Naive thymus-derived CD4-positive, alpha-beta T cell (primary cell): ENCODE measurements at regions of chr12 and their contacts with region 1.

Region 1: GRCh38 chr12:32679091-32679919 is at the start of gene DNM1L:
- DNase-seq: peak; percentile 85 to 93 (median 92)
- ATAC-seq: peak; percentile 99
- H3K4me3 ChIP-seq: peak within 1 kb of the TSS; percentile 83
- H3K4me3 Mint-ChIP-seq: peak within 1 kb of the TSS; percentile 83 to 97 (median 93)
- H3K27ac ChIP-seq: peak within 1 kb of the TSS; percentile 82
- H3K27ac Mint-ChIP-seq: peak within 1 kb of the TSS; percentile 59 to 95 (median 89)
- H3K4me1 ChIP-seq: peaks cover 9 to 11% of the 10 kb centered on the region in 2 donors
- H3K4me1 Mint-ChIP-seq: peaks cover 16 to 39% (median 31%) of the 10 kb centered on the region in 7 donors
- H3K27me3 ChIP-seq: no peaks in the 10 kb centered on the region
- H3K27me3 Mint-ChIP-seq: no peaks in the 10 kb centered on the region
- total RNA-seq, gene DNM1L: 41.6 to 68.4 (median 58.9) TPM

Region 2: DNA sequence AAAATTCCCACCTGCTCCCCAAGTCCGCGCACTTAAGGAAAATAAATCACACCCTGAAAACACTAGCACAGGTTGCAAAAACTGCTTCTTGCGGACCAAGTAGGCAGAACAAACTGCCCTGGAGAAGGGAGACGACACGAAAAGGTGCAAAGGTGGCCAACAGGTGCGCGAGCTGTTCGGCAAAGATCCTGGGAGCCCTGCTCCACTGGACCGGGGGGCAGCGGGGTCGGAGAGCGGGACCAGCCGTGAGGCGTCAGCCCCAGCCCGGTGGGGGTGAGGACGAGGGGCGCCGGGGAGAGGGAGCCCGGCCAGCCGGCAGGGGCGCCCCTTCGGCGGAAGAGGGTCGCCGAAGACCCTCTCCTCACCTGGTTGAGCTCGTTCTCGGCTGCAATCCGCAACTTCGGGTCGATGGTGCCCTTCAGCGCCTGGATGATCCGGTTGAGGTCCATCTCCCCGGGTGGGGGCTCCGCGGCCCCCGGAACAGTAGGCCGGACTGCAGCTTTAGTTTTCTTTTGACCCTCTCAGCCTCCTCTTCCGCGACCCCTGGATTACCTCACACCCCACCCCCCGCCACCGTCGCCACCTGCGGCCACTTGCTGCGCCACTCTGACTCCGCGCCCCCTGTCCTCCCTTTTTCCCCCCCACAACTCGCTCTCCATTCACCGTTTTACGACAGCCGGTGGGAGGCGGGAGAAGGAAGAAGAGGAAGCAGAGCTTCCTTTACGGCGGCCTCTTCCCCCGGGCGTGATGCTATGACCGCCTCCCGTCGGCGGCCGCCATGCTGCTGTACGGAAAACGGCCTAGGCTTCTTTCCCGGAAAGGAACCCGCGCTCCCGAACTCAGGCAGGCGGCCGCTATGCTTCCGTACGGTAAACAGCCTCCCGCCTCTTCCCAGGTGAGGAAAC is 1983.9 kb before region 1 on chr12 and contains the start of gene IPO8:
- CTCF ChIA-PET with region 1: no interaction called
- POLR2A ChIA-PET with region 1: no interaction called
- intact Hi-C with region 1: loop called in 1 of 2 experiments (anchors 5 kb)
- DNase-seq: peak; percentile 61 to 83 (median 76)
- ATAC-seq: peak; percentile 97
- H3K4me3 ChIP-seq: peak within 1 kb of the TSS; percentile 94
- H3K4me3 Mint-ChIP-seq: peak within 1 kb of the TSS; percentile 93 to 100 (median 96)
- H3K27ac ChIP-seq: peak within 1 kb of the TSS; percentile 78
- H3K27ac Mint-ChIP-seq: peak within 1 kb of the TSS; percentile 91 to 98 (median 94)
- H3K4me1 ChIP-seq: peaks cover 22 to 28% of the 10 kb centered on the region in 2 donors
- H3K4me1 Mint-ChIP-seq: peaks cover 27 to 52% (median 45%) of the 10 kb centered on the region in 7 donors
- H3K27me3 ChIP-seq: no peaks in the 10 kb centered on the region
- H3K27me3 Mint-ChIP-seq: peaks cover 0 to 6% (median 4%) of the 10 kb centered on the region in 5 donors
- total RNA-seq, gene IPO8: 30.4 to 59.2 (median 44.4) TPM

Region 3: GRCh38 chr12:31659087-31659933 is 1020.0 kb before region 1 on chr12 and contains the start of gene ETFBKMT:
- CTCF ChIA-PET with region 1: no interaction called
- POLR2A ChIA-PET with region 1: no interaction called
- intact Hi-C with region 1: loop called (anchors 1 kb)
- DNase-seq: peak; percentile 85 to 95 (median 93)
- ATAC-seq: peak; percentile 99
- H3K4me3 ChIP-seq: peak within 1 kb of the TSS; percentile 85
- H3K4me3 Mint-ChIP-seq: peak within 1 kb of the TSS; percentile 81 to 99 (median 96)
- H3K27ac ChIP-seq: peak within 1 kb of the TSS; percentile 90
- H3K27ac Mint-ChIP-seq: peak within 1 kb of the TSS; percentile 91 to 100 (median 97)
- H3K4me1 ChIP-seq: peaks cover 0 to 10% of the 10 kb centered on the region in 2 donors
- H3K4me1 Mint-ChIP-seq: peaks cover 3 to 36% (median 24%) of the 10 kb centered on the region in 7 donors
- H3K27me3 ChIP-seq: no peaks in the 10 kb centered on the region
- H3K27me3 Mint-ChIP-seq: no peaks in the 10 kb centered on the region
- total RNA-seq, gene ETFBKMT: 0.92 to 2.0 (median 1.9) TPM

Region 4: DNA sequence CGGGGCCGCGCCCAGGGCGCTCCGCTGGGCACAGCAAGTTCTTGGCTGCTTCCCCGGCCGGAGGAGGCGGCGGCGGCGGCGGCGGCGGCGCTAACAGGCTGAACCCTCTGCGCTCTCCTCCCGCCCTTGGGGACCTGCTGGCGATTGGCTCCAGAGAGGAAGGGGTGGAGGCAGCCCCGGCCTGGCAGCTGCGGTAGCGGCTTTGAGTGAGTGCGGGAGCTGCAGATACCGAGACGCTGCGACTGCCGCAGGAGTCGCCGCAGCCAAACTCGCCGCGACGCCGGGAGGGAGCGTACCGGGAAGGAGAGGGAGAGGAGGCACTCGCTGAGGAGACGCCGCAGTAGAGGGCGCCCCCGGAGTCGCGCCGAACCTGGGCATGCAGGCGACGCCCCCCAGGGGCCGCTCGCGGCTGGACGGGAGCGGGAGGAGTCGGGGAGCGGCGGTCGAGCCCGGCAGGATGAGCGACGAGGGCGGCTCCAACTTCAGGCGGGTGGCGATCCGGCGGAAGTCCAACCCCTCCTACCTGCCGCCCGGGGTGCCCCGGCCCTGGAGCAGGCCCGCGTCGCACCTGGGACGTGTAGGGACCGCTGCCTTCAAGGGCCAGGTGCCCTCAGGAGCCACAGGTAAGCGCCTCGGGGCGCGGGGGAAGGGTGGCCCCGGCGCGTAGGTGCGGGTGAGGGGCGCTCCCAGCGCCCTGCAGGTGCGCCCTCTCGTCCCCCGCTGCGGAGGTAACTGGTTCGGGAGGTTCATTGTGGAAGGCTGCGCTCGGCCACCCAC is 279.8 kb before region 1 on chr12 and contains the start of gene FGD4:
- CTCF ChIA-PET with region 1: no interaction called
- POLR2A ChIA-PET with region 1: no interaction called
- intact Hi-C with region 1: loop called in 1 of 2 experiments (anchors 5 kb)
- DNase-seq: peak; percentile 16 to 68 (median 37)
- ATAC-seq: peak; percentile 91
- H3K4me3 ChIP-seq: peak within 1 kb of the TSS; percentile 51
- H3K4me3 Mint-ChIP-seq: peak within 1 kb of the TSS; percentile 84 to 97 (median 90)
- H3K27ac ChIP-seq: no peak within 1 kb of the TSS
- H3K27ac Mint-ChIP-seq: peak within 1 kb of the TSS in 1 of 9 donors; percentile 62
- H3K4me1 ChIP-seq: peaks cover 0 to 5% of the 10 kb centered on the region in 2 donors
- H3K4me1 Mint-ChIP-seq: peaks cover 3 to 13% (median 9%) of the 10 kb centered on the region in 7 donors
- H3K27me3 ChIP-seq: peaks cover 0 to 8% of the 10 kb centered on the region in 2 donors
- H3K27me3 Mint-ChIP-seq: peaks cover 31 to 53% (median 40%) of the 10 kb centered on the region in 5 donors
- total RNA-seq, gene FGD4: 0.17 to 13.7 (median 0.62) TPM

Region 5: GRCh38 chr12:32603858-32604257 is 75.4 kb before region 1 on chr12:
- CTCF ChIA-PET with region 1: no interaction called
- POLR2A ChIA-PET with region 1: no interaction called
- intact Hi-C with region 1: loop called in 1 of 2 experiments (anchors 5 kb)
- DNase-seq: peak in 1 of 9 donors; percentile 57
- ATAC-seq: no peak
- H3K4me3 ChIP-seq: no peak overlapping the region
- H3K4me3 Mint-ChIP-seq: peak overlapping the region in 1 of 10 donors; percentile 57
- H3K27ac ChIP-seq: no peak overlapping the region
- H3K27ac Mint-ChIP-seq: peak overlapping the region in 1 of 9 donors; percentile 83
- H3K4me1 ChIP-seq: no peaks in the 10 kb centered on the region
- H3K4me1 Mint-ChIP-seq: peaks cover 0 to 27% (median 0%) of the 10 kb centered on the region in 7 donors
- H3K27me3 ChIP-seq: no peaks in the 10 kb centered on the region
- H3K27me3 Mint-ChIP-seq: no peaks in the 10 kb centered on the region

Region 6: DNA sequence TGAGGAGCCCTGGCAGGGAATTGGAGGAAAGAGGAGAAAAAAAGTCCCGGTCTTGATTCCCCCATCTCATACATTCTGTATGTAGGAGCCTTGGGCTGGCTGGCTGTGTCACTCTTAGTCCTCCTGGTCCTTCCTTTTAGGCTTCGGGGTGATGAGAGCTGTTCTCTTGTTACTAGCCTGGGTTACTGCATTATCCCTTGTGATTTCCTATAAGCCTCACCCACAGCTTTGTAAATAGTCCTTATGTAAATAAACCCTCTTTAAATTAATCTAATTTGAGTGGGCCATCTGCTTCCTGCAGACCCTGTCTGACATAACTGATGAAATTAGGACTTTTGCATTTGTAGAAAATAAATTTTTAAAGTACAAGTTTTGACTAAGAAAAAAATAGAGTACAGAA is 19.0 kb after region 1 on chr12:
- CTCF ChIA-PET with region 1: no interaction called
- POLR2A ChIA-PET with region 1: no interaction called
- intact Hi-C with region 1: loop called in 1 of 2 experiments (anchors 2 kb)
- DNase-seq: no peak
- ATAC-seq: no peak
- H3K4me3 ChIP-seq: no peak overlapping the region
- H3K4me3 Mint-ChIP-seq: no peak overlapping the region
- H3K27ac ChIP-seq: no peak overlapping the region
- H3K27ac Mint-ChIP-seq: no peak overlapping the region
- H3K4me1 ChIP-seq: no peaks in the 10 kb centered on the region
- H3K4me1 Mint-ChIP-seq: peaks cover 11 to 25% (median 17%) of the 10 kb centered on the region in 7 donors
- H3K27me3 ChIP-seq: no peaks in the 10 kb centered on the region
- H3K27me3 Mint-ChIP-seq: no peaks in the 10 kb centered on the region

Region 7: GRCh38 chr12:34022079-34022830 is 1343.0 kb after region 1 on chr12 and contains the start of gene ALG10:
- CTCF ChIA-PET with region 1: no interaction called
- POLR2A ChIA-PET with region 1: interaction called, 4 read pairs
- intact Hi-C with region 1: loop called (anchors 1 kb)
- DNase-seq: peak; percentile 88 to 98 (median 96)
- ATAC-seq: peak; percentile 98
- H3K4me3 ChIP-seq: peak within 1 kb of the TSS; percentile 87
- H3K4me3 Mint-ChIP-seq: peak within 1 kb of the TSS; percentile 93 to 99 (median 96)
- H3K27ac ChIP-seq: peak within 1 kb of the TSS; percentile 94
- H3K27ac Mint-ChIP-seq: peak within 1 kb of the TSS; percentile 95 to 99 (median 98)
- H3K4me1 ChIP-seq: peaks cover 4 to 8% of the 10 kb centered on the region in 2 donors
- H3K4me1 Mint-ChIP-seq: peaks cover 6 to 42% (median 30%) of the 10 kb centered on the region in 7 donors
- H3K27me3 ChIP-seq: no peaks in the 10 kb centered on the region
- H3K27me3 Mint-ChIP-seq: no peaks in the 10 kb centered on the region
- total RNA-seq, gene ALG10: 10.2 to 21.6 (median 17.5) TPM